Mammary epithelial cell (primary cell): ENCODE measurements at regions of chr13 and their contacts with region 1.

Region 1: GRCh38 chr13:27620377-27621115 is at the start of gene LNX2:
- DNase-seq: peak; percentile 97
- H3K4me3 ChIP-seq: peak within 1 kb of the TSS; percentile 72 to 93 (median 87)
- H3K27ac ChIP-seq: peak within 1 kb of the TSS; percentile 93
- H3K4me1 ChIP-seq: peaks cover 35% of the 10 kb centered on the region
- H3K27me3 ChIP-seq: no peaks in the 10 kb centered on the region
- CTCF ChIP-seq: no peak
- total RNA-seq, gene LNX2: 16.1 to 26.3 TPM

Region 2: GRCh38 chr13:27449936-27450828 is 170.4 kb before region 1 on chr13 and contains the start of gene MTIF3:
- CTCF ChIA-PET with region 1: no interaction called
- dilution Hi-C with region 1: no loop called
- in situ Hi-C with region 1: no loop called
- intact Hi-C with region 1: loop called (anchors 1 kb)
- DNase-seq: peak; percentile 94
- H3K4me3 ChIP-seq: peak within 1 kb of the TSS; percentile 58 to 97 (median 87)
- H3K27ac ChIP-seq: peak within 1 kb of the TSS; percentile 76
- H3K4me1 ChIP-seq: peaks cover 9% of the 10 kb centered on the region
- H3K27me3 ChIP-seq: no peaks in the 10 kb centered on the region
- CTCF ChIP-seq: peak; percentile 8 to 14
- total RNA-seq, gene MTIF3: 32.2 to 35.5 TPM

Region 3: GRCh38 chr13:27549406-27549981 is 71.1 kb before region 1 on chr13:
- CTCF ChIA-PET with region 1: no interaction called
- dilution Hi-C with region 1: no loop called
- in situ Hi-C with region 1: no loop called
- intact Hi-C with region 1: loop called (anchors 1 kb)
- DNase-seq: peak; percentile 97
- H3K4me3 ChIP-seq: no peak overlapping the region
- H3K27ac ChIP-seq: peak overlapping the region; percentile 88
- H3K4me1 ChIP-seq: peaks cover 12% of the 10 kb centered on the region
- H3K27me3 ChIP-seq: no peaks in the 10 kb centered on the region
- CTCF ChIP-seq: no peak

Region 4: DNA sequence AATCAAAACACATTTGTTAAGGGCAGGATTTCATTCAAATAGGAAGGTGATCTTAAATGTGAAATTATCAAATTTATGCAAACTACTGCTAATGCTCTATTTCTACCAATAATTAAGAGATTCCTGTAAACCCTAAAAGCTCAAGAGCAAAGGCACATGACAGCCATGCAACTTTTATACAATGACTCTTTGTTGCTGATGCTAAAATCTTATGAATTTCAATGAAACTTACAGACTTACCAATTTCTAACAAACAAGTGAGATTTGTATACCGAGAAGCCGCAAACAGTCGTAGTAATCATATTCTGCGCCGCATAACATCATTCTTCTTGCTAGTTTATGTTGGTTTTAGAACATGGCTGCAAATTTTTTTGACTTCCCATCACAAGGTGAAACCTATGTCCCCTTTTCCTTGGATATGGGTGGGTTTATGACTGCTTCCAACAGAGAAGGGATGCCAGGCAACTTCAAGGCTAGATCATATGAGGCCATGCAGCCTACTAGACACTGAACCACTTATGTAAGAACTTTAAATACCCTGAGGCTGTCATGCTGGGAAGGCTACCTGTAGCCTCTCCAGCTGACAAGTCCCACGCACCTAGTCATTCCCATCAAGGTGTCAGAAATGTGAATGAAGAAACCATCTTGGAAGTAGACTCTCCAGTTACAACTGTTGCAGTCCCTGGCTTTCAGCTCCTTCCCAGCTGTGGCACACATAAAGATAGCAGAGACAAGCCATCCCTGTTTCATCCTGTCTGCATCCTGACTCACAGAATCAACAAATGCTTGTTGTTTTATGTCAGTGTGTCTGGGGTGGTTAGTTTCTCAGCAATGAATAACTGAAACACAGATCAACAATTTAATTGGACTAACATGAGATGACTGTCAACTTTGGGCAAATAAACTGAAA is 42.2 kb before region 1 on chr13:
- CTCF ChIA-PET with region 1: no interaction called
- dilution Hi-C with region 1: no loop called
- in situ Hi-C with region 1: no loop called
- intact Hi-C with region 1: loop called (anchors 2 kb)
- DNase-seq: peak; percentile 88
- H3K4me3 ChIP-seq: no peak overlapping the region
- H3K27ac ChIP-seq: peak overlapping the region; percentile 9
- H3K4me1 ChIP-seq: peaks cover 15% of the 10 kb centered on the region
- H3K27me3 ChIP-seq: no peaks in the 10 kb centered on the region
- CTCF ChIP-seq: no peak

Region 5: DNA sequence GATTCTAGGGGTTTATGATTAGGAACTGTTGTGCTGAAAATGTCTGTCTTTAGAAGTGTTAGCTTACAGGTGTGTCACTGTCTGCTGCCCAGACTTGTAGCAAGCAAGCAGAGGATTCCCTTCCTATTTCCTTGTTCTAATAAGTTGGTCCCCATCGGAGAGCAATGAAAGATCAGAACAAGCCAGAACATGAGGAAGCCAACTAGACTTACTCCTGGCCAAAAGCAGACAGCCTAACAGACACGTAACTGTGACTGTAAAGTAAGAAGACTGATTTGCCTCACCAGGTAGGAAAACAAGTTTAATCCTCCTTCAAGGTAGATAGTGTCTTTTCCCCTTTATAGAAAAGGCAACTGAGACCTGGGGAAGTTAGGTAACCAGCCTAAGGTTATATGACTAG is 13.7 kb after region 1 on chr13:
- CTCF ChIA-PET with region 1: no interaction called
- dilution Hi-C with region 1: no loop called
- in situ Hi-C with region 1: no loop called
- intact Hi-C with region 1: loop called (anchors 1 kb)
- DNase-seq: peak; percentile 99
- H3K4me3 ChIP-seq: peak overlapping the region in 2 of 3 experiments; percentile 23 to 24
- H3K27ac ChIP-seq: peak overlapping the region; percentile 43
- H3K4me1 ChIP-seq: peaks cover 49% of the 10 kb centered on the region
- H3K27me3 ChIP-seq: no peaks in the 10 kb centered on the region
- CTCF ChIP-seq: no peak

Region 6: GRCh38 chr13:27783111-27783510 is 162.6 kb after region 1 on chr13:
- CTCF ChIA-PET with region 1: no interaction called
- dilution Hi-C with region 1: no loop called
- in situ Hi-C with region 1: no loop called
- intact Hi-C with region 1: no loop called
- DNase-seq: no peak
- H3K4me3 ChIP-seq: no peak overlapping the region
- H3K27ac ChIP-seq: no peak overlapping the region
- H3K4me1 ChIP-seq: no peaks in the 10 kb centered on the region
- H3K27me3 ChIP-seq: peaks cover 3% of the 10 kb centered on the region
- CTCF ChIP-seq: peak; percentile 12 to 68